ENCODE measurements at regions of chr5 and their contacts with region 1.

Region 1: DNA sequence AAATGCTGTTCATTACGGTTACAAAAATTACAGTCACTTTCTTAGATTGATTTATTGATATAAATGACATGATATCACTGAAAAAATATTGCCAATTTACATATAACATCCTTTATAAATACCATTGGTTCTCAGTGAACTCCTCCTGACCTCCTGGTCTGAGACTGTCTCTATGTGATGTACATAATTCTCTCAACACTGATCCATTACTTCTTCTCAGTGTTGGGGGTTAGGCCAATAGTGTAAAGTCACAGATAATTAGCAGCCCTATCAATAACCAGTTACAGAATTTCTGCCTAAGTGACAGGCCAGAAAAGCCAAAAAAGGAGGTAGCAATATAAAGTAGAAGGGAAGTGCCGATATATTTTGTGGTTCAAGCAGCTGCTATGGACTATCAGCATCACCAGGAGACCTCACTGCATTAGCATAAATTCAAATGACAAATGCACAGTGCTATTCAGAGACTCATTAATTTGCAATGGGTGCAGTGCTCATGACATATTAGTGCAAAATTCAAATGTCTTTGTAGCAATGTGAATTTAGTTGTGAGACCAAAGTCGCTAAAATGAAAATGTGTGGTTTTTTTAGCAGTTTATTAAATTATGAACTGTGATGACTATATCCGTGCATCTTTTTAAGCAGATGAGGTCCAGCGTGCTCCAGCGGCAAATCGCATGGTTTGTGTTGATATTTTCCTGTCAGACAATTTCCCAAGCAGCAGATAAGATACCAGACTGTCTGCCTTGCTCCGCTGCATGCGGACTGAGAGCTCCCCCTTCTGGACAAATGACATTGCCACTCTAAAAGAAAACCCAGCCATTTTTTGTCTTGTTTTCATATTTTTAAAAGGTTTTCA is 144.6 kb downstream of the CETN3 start:
- DNase-seq: peak; percentile 75
- H3K4me3 Mint-ChIP-seq: no peak overlapping the region
- H3K27ac Mint-ChIP-seq: no peak overlapping the region
- H3K4me1 Mint-ChIP-seq: no peaks in the 10 kb centered on the region
- H3K27me3 Mint-ChIP-seq: no peaks in the 10 kb centered on the region
- CTCF ChIP-seq: peak; percentile 85

Region 2: GRCh38 chr5:89268460-89268859 is 996.5 kb before region 1 on chr5:
- CTCF ChIA-PET with region 1: no interaction called
- intact Hi-C with region 1: loop called (anchors 10 kb)
- DNase-seq: no peak
- H3K4me3 Mint-ChIP-seq: no peak overlapping the region
- H3K27ac Mint-ChIP-seq: no peak overlapping the region
- H3K4me1 Mint-ChIP-seq: peaks cover 6% of the 10 kb centered on the region
- H3K27me3 Mint-ChIP-seq: no peaks in the 10 kb centered on the region
- CTCF ChIP-seq: no peak

Region 3: DNA sequence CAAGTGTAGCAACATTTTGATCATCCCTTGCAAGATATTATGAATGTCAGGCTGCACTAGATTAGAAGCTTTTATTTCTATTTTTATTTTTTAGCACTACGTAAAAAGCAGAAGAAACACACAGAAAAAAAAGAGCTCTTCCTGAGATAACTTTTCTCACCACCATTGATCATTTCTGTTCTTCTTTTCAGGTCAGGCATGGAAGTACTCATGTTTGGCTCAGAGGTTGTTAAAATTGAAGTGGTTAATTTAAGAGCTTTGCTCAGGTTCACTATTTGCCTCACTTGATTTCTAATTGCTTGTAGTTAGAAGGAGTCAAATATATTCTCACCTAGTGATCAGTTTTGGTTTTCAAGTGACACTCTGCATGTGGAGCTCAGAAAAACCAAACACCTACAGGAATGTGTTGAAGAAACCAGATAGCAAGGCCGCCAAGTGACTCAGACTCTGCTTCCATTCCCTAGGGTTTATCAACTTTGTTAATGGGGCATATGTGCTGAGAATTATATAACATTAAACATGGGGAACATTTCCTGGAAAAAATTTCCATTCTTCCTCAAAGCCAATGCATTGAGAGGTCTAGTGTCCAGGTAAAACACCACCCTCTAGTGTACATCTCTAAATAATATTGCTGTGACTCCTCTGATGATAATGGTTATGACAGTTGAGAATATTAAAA is 535.2 kb before region 1 on chr5:
- CTCF ChIA-PET with region 1: no interaction called
- intact Hi-C with region 1: loop called (anchors 2 kb)
- DNase-seq: no peak
- H3K4me3 Mint-ChIP-seq: no peak overlapping the region
- H3K27ac Mint-ChIP-seq: no peak overlapping the region
- H3K4me1 Mint-ChIP-seq: peaks cover 9% of the 10 kb centered on the region
- H3K27me3 Mint-ChIP-seq: no peaks in the 10 kb centered on the region
- CTCF ChIP-seq: peak; percentile 41

Region 4: GRCh38 chr5:89864936-89865335 is 400.0 kb before region 1 on chr5:
- CTCF ChIA-PET with region 1: no interaction called
- intact Hi-C with region 1: loop called (anchors 10 kb)
- DNase-seq: no peak
- H3K4me3 Mint-ChIP-seq: no peak overlapping the region
- H3K27ac Mint-ChIP-seq: no peak overlapping the region
- H3K4me1 Mint-ChIP-seq: no peaks in the 10 kb centered on the region
- H3K27me3 Mint-ChIP-seq: no peaks in the 10 kb centered on the region
- CTCF ChIP-seq: no peak

Region 5: GRCh38 chr5:89930591-89931392 is 334.1 kb before region 1 on chr5:
- CTCF ChIA-PET with region 1: no interaction called
- intact Hi-C with region 1: loop called (anchors 5 kb)
- DNase-seq: no peak
- H3K4me3 Mint-ChIP-seq: peak overlapping the region; percentile 26
- H3K27ac Mint-ChIP-seq: peak overlapping the region; percentile 81
- H3K4me1 Mint-ChIP-seq: peaks cover 39% of the 10 kb centered on the region
- H3K27me3 Mint-ChIP-seq: no peaks in the 10 kb centered on the region
- CTCF ChIP-seq: no peak

Region 6: DNA sequence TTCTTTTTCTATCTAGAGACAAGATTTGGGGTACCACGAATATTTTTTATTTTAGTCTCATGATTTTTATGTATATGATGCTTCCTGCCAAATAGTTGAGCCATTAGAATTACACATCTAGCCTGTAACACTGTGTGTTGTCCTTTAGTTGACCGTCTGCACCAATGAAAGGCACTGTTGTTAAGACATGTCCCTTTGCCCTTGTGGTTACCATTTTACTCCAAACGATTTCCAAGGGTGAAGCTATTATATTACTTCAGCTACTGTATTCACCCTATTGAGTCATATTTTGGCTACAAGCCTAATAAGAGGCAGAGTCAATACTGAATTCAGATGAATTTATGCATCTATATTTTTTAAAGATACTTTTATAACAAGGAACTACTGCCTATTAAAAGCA is 63.0 kb before region 1 on chr5:
- CTCF ChIA-PET with region 1: no interaction called
- intact Hi-C with region 1: loop called (anchors 5 kb)
- DNase-seq: peak; percentile 77
- H3K4me3 Mint-ChIP-seq: peak overlapping the region; percentile 3
- H3K27ac Mint-ChIP-seq: peak overlapping the region; percentile 90
- H3K4me1 Mint-ChIP-seq: peaks cover 42% of the 10 kb centered on the region
- H3K27me3 Mint-ChIP-seq: no peaks in the 10 kb centered on the region
- CTCF ChIP-seq: no peak